ENCODE measurements at regions of chrX and their contacts with region 1.

Region 1: GRCh38 chrX:73855546-73855945 is 292.5 kb downstream of the CHIC1 start:
- DNase-seq: peak; percentile 32 to 84 (median 55)
- ATAC-seq: peak; percentile 42
- H3K4me3 ChIP-seq: no peak overlapping the region
- H3K4me3 Mint-ChIP-seq: no peak overlapping the region
- H3K27ac ChIP-seq: no peak overlapping the region
- H3K27ac Mint-ChIP-seq: no peak overlapping the region
- H3K4me1 ChIP-seq: no peaks in the 10 kb centered on the region
- H3K4me1 Mint-ChIP-seq: no peaks in the 10 kb centered on the region
- H3K27me3 ChIP-seq: no peaks in the 10 kb centered on the region
- H3K27me3 Mint-ChIP-seq: no peaks in the 10 kb centered on the region
- CTCF ChIP-seq: no peak

Region 2: GRCh38 chrX:74015379-74016019 is 160.0 kb after region 1 on chrX:
- CTCF ChIA-PET with region 1: interaction called, 38 read pairs
- POLR2A ChIA-PET with region 1: no interaction called
- intact Hi-C with region 1: loop called (anchors 1 kb)
- DNase-seq: peak; percentile 12 to 80 (median 59)
- ATAC-seq: no peak
- H3K4me3 ChIP-seq: no peak overlapping the region
- H3K4me3 Mint-ChIP-seq: no peak overlapping the region
- H3K27ac ChIP-seq: no peak overlapping the region
- H3K27ac Mint-ChIP-seq: no peak overlapping the region
- H3K4me1 ChIP-seq: no peaks in the 10 kb centered on the region
- H3K4me1 Mint-ChIP-seq: peaks cover 4% of the 10 kb centered on the region
- H3K27me3 ChIP-seq: no peaks in the 10 kb centered on the region
- H3K27me3 Mint-ChIP-seq: no peaks in the 10 kb centered on the region
- CTCF ChIP-seq: peak; percentile 75

Region 3: GRCh38 chrX:74133156-74133796 is 277.7 kb after region 1 on chrX:
- CTCF ChIA-PET with region 1: interaction called, 9 read pairs
- POLR2A ChIA-PET with region 1: no interaction called
- intact Hi-C with region 1: loop called (anchors 1 kb)
- DNase-seq: peak in 5 of 9 experiments; percentile 10 to 60 (median 28)
- ATAC-seq: peak; percentile 40
- H3K4me3 ChIP-seq: no peak overlapping the region
- H3K4me3 Mint-ChIP-seq: no peak overlapping the region
- H3K27ac ChIP-seq: no peak overlapping the region
- H3K27ac Mint-ChIP-seq: no peak overlapping the region
- H3K4me1 ChIP-seq: no peaks in the 10 kb centered on the region
- H3K4me1 Mint-ChIP-seq: no peaks in the 10 kb centered on the region
- H3K27me3 ChIP-seq: no peaks in the 10 kb centered on the region
- H3K27me3 Mint-ChIP-seq: no peaks in the 10 kb centered on the region
- CTCF ChIP-seq: no peak

Region 4: DNA sequence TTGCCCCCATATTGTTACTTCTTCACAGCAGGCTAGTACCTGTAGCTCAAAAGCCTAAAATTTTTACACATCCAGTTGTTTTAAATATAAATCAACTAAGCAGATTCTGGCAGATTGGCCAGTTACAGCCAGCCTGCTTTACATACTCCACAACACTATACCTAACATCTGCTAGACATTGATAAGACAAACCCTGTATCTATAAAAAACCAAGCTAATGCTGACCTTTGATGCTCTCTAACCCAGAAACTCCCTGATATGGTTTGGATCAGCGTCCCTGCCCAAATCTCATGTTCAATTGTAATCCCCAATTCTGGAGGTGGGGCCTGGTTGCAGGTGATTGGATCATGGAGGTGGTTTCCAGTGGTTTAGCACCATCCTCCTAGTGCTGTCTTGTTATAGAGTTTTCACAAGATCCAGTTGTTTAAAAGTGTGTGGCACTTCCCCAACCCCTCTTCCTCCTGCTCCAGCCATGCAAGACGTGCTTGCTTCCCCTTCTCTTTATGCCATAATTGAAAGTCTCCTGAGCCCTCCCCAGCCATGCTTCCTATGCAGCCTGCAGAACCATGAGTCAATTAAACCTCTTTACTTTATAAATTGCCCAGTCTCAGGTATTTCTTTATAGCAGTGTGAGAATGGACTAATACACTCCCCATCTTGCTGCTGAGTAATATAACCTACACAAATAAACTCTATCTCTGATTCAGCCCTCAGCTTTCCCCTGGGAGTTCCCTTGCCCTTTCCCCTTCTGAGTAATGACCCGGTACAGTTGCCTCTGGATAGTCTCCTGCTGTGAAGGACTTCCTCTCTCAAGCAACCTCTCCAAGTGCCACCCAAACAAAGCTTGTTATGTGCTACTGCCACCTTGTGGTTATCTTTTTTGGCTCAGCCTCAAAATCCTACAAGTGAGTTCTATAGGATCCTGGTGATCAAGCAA is 488.1 kb after region 1 on chrX:
- CTCF ChIA-PET with region 1: interaction called, 4 read pairs
- POLR2A ChIA-PET with region 1: no interaction called
- intact Hi-C with region 1: loop called (anchors 1 kb)
- DNase-seq: peak; percentile 1 to 67 (median 33)
- ATAC-seq: peak; percentile 40
- H3K4me3 ChIP-seq: no peak overlapping the region
- H3K4me3 Mint-ChIP-seq: no peak overlapping the region
- H3K27ac ChIP-seq: no peak overlapping the region
- H3K27ac Mint-ChIP-seq: no peak overlapping the region
- H3K4me1 ChIP-seq: no peaks in the 10 kb centered on the region
- H3K4me1 Mint-ChIP-seq: peaks cover 2% of the 10 kb centered on the region
- H3K27me3 ChIP-seq: no peaks in the 10 kb centered on the region
- H3K27me3 Mint-ChIP-seq: peaks cover 3% of the 10 kb centered on the region
- CTCF ChIP-seq: peak; percentile 36

Region 5: DNA sequence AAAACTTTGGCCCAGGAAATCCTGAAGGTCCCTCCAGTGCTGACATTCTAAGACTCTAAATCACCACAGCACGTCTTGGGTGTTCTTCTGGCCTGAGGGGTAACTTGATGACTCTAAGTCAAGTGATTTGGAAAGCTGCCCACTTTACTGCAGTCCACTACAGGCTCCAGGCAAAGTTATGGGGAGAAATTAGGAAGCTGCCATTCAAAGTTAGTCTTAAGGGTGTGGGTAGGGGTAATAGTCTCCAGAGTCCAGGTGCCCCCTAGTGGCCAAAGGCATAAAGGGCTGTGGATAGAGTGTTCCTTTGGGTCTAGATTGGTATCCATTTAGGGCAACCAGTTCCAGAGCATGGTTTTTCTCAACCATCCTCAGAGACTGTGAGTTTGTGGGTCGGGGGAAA is 527.1 kb after region 1 on chrX:
- CTCF ChIA-PET with region 1: no interaction called
- POLR2A ChIA-PET with region 1: no interaction called
- intact Hi-C with region 1: loop called in 1 of 2 experiments (anchors 5 kb)
- DNase-seq: peak; percentile 5 to 67 (median 51)
- ATAC-seq: no peak
- H3K4me3 ChIP-seq: no peak overlapping the region
- H3K4me3 Mint-ChIP-seq: no peak overlapping the region
- H3K27ac ChIP-seq: no peak overlapping the region
- H3K27ac Mint-ChIP-seq: no peak overlapping the region
- H3K4me1 ChIP-seq: no peaks in the 10 kb centered on the region
- H3K4me1 Mint-ChIP-seq: no peaks in the 10 kb centered on the region
- H3K27me3 ChIP-seq: no peaks in the 10 kb centered on the region
- H3K27me3 Mint-ChIP-seq: peaks cover 5% of the 10 kb centered on the region
- CTCF ChIP-seq: peak; percentile 29

Region 6: GRCh38 chrX:75603833-75604232 is 1748.3 kb after region 1 on chrX:
- CTCF ChIA-PET with region 1: no interaction called
- POLR2A ChIA-PET with region 1: no interaction called
- intact Hi-C with region 1: loop called in 1 of 2 experiments (anchors 10 kb)
- DNase-seq: peak in 2 of 9 experiments; percentile 17 to 43
- ATAC-seq: no peak
- H3K4me3 ChIP-seq: no peak overlapping the region
- H3K4me3 Mint-ChIP-seq: no peak overlapping the region
- H3K27ac ChIP-seq: no peak overlapping the region
- H3K27ac Mint-ChIP-seq: no peak overlapping the region
- H3K4me1 ChIP-seq: no peaks in the 10 kb centered on the region
- H3K4me1 Mint-ChIP-seq: no peaks in the 10 kb centered on the region
- H3K27me3 ChIP-seq: no peaks in the 10 kb centered on the region
- H3K27me3 Mint-ChIP-seq: no peaks in the 10 kb centered on the region
- CTCF ChIP-seq: peak; percentile 60